ENCODE measurements at regions of chr9 and their contacts with region 1.

Region 1: DNA sequence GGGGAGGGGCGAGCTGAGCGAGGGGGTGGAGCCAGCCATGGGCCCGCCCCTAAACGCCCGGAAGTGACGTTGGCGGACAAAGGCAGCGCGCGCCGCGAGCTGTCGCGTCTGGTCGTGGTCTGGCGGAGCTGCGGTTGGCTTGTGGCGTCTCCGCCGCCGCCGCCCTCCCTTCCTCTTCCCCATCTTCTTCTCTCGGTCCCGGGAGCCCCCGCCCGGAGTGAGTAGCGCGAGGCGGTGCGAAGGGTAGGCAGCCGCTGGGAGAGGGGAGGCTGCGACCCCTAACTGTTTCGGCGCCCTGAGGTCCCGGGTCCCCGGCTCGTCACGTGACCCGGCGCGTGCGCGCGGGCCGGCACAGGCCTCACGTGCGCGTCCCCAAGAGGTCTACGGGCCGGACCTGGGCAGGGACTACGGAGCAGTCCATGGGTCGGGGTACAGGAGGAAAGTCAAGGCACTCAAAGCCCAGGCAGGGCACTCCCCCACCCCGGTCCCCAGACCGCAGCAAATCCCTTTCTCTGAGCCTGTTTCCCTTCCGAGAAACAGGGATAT is at the start of gene NTMT1:
- DNase-seq: peak; percentile 72 to 95 (median 87)
- ATAC-seq: peak; percentile 80 to 86 (median 84)
- H3K4me3 ChIP-seq: peak within 1 kb of the TSS; percentile 88 to 95
- H3K4me3 Mint-ChIP-seq: peak within 1 kb of the TSS; percentile 84 to 98 (median 85)
- H3K27ac ChIP-seq: peak within 1 kb of the TSS; percentile 82
- H3K27ac Mint-ChIP-seq: peak within 1 kb of the TSS; percentile 90 to 91
- H3K4me1 ChIP-seq: peaks cover 13 to 69% of the 10 kb centered on the region in 2 experiments
- H3K4me1 Mint-ChIP-seq: peaks cover 60 to 65% (median 61%) of the 10 kb centered on the region in 3 donors
- H3K27me3 ChIP-seq: peaks cover 0 to 15% of the 10 kb centered on the region in 2 experiments
- H3K27me3 Mint-ChIP-seq: peaks cover 11 to 22% of the 10 kb centered on the region in 2 donors
- total RNA-seq, gene NTMT1: 31.0 to 45.0 (median 40.3) TPM

Region 2: GRCh38 chr9:129131300-129132145 is 494.6 kb before region 1 on chr9:
- CTCF ChIA-PET with region 1: interaction called in 1 of 2 experiments, 45 read pairs
- POLR2A ChIA-PET with region 1: interaction called in 1 of 2 experiments, 6 read pairs
- DNase-seq: peak; percentile 66 to 90 (median 80)
- ATAC-seq: peak; percentile 96 to 100 (median 98)
- H3K4me3 ChIP-seq: no peak overlapping the region
- H3K4me3 Mint-ChIP-seq: no peak overlapping the region
- H3K27ac ChIP-seq: peak overlapping the region; percentile 2
- H3K27ac Mint-ChIP-seq: peak overlapping the region in 1 of 2 donors; percentile 16
- H3K4me1 ChIP-seq: peaks cover 0 to 11% of the 10 kb centered on the region in 2 experiments
- H3K4me1 Mint-ChIP-seq: peaks cover 6 to 8% (median 6%) of the 10 kb centered on the region in 3 donors
- H3K27me3 ChIP-seq: no peaks in the 10 kb centered on the region
- H3K27me3 Mint-ChIP-seq: no peaks in the 10 kb centered on the region

Region 3: DNA sequence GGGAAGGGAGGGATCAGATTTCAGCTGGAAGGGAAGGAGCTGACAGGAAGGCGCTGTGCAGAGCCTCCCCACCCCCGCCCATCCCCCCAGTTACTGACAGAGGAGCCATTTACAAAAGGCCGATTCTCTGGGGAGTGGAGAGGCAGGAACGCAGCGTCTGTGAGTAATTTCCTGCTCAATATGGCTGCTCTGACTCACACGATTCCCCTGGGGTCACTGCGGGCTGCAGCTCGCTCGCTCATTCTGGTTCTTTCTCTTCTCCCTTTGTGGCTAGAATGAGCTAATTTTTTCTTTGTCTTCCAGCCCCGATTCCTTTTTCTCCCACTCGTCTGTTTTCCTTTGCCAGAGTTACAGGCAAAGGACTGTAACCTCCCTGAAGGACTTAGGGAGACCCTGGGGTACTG is 486.2 kb before region 1 on chr9:
- CTCF ChIA-PET with region 1: interaction called, 5 to 13 read pairs
- POLR2A ChIA-PET with region 1: interaction called, 3 read pairs
- DNase-seq: peak; percentile 45 to 88 (median 64)
- ATAC-seq: peak; percentile 86 to 89 (median 88)
- H3K4me3 ChIP-seq: peak overlapping the region; percentile 56 to 82
- H3K4me3 Mint-ChIP-seq: peak overlapping the region; percentile 80 to 90 (median 86)
- H3K27ac ChIP-seq: peak overlapping the region; percentile 99
- H3K27ac Mint-ChIP-seq: peak overlapping the region; percentile 92 to 99
- H3K4me1 ChIP-seq: peaks cover 11 to 51% of the 10 kb centered on the region in 2 experiments
- H3K4me1 Mint-ChIP-seq: peaks cover 29 to 41% (median 37%) of the 10 kb centered on the region in 3 donors
- H3K27me3 ChIP-seq: no peaks in the 10 kb centered on the region
- H3K27me3 Mint-ChIP-seq: no peaks in the 10 kb centered on the region

Region 4: GRCh38 chr9:129610473-129611301 is 15.5 kb before region 1 on chr9:
- CTCF ChIA-PET with region 1: interaction called, 3 to 11 read pairs
- POLR2A ChIA-PET with region 1: no interaction called
- DNase-seq: peak; percentile 36 to 83 (median 62)
- ATAC-seq: peak; percentile 69 to 81 (median 74)
- H3K4me3 ChIP-seq: peak overlapping the region; percentile 48 to 71
- H3K4me3 Mint-ChIP-seq: peak overlapping the region; percentile 71 to 93 (median 76)
- H3K27ac ChIP-seq: no peak overlapping the region
- H3K27ac Mint-ChIP-seq: peak overlapping the region in 1 of 2 donors; percentile 70
- H3K4me1 ChIP-seq: peaks cover 10 to 45% of the 10 kb centered on the region in 2 experiments
- H3K4me1 Mint-ChIP-seq: peaks cover 25 to 36% (median 32%) of the 10 kb centered on the region in 3 donors
- H3K27me3 ChIP-seq: peaks cover 0 to 42% of the 10 kb centered on the region in 2 experiments
- H3K27me3 Mint-ChIP-seq: no peaks in the 10 kb centered on the region

Measured in T-cell (primary cell).